Activated CD8-positive, alpha-beta T cell treated with anti-CD3 and anti-CD28 coated beads, Interleukin-2, amount 10 ng/mL, durations not matched to agents 7 days and 5 days (primary cell): ENCODE measurements at regions of chr18 and their contacts with region 1.

Region 1: GRCh38 chr18:77207540-77207939 is 42.1 kb upstream of the GALR1 start:
- DNase-seq: peak; percentile 55
- ATAC-seq: peak; percentile 68
- H3K4me3 Mint-ChIP-seq: no peak overlapping the region
- H3K27ac Mint-ChIP-seq: no peak overlapping the region
- H3K4me1 Mint-ChIP-seq: peaks cover 49% of the 10 kb centered on the region
- H3K27me3 Mint-ChIP-seq: no peaks in the 10 kb centered on the region

Region 2: GRCh38 chr18:77054606-77055428 is 152.7 kb before region 1 on chr18:
- CTCF ChIA-PET with region 1: interaction called, 10 read pairs
- POLR2A ChIA-PET with region 1: no interaction called
- DNase-seq: peak; percentile 93
- ATAC-seq: peak; percentile 91
- H3K4me3 Mint-ChIP-seq: peak overlapping the region; percentile 85
- H3K27ac Mint-ChIP-seq: peak overlapping the region; percentile 100
- H3K4me1 Mint-ChIP-seq: peaks cover 71% of the 10 kb centered on the region
- H3K27me3 Mint-ChIP-seq: no peaks in the 10 kb centered on the region

Region 3: GRCh38 chr18:77067291-77068061 is 140.1 kb before region 1 on chr18:
- CTCF ChIA-PET with region 1: interaction called, 16 read pairs
- POLR2A ChIA-PET with region 1: interaction called, 4 read pairs
- DNase-seq: peak; percentile 80
- ATAC-seq: peak; percentile 72
- H3K4me3 Mint-ChIP-seq: peak overlapping the region; percentile 61
- H3K27ac Mint-ChIP-seq: peak overlapping the region; percentile 95
- H3K4me1 Mint-ChIP-seq: peaks cover 99% of the 10 kb centered on the region
- H3K27me3 Mint-ChIP-seq: no peaks in the 10 kb centered on the region

Region 4: GRCh38 chr18:77101410-77102258 is 105.9 kb before region 1 on chr18:
- CTCF ChIA-PET with region 1: interaction called, 14 read pairs
- POLR2A ChIA-PET with region 1: interaction called, 5 read pairs
- DNase-seq: peak; percentile 48
- ATAC-seq: peak; percentile 56
- H3K4me3 Mint-ChIP-seq: peak overlapping the region; percentile 71
- H3K27ac Mint-ChIP-seq: peak overlapping the region; percentile 96
- H3K4me1 Mint-ChIP-seq: peaks cover 93% of the 10 kb centered on the region
- H3K27me3 Mint-ChIP-seq: no peaks in the 10 kb centered on the region

Region 5: DNA sequence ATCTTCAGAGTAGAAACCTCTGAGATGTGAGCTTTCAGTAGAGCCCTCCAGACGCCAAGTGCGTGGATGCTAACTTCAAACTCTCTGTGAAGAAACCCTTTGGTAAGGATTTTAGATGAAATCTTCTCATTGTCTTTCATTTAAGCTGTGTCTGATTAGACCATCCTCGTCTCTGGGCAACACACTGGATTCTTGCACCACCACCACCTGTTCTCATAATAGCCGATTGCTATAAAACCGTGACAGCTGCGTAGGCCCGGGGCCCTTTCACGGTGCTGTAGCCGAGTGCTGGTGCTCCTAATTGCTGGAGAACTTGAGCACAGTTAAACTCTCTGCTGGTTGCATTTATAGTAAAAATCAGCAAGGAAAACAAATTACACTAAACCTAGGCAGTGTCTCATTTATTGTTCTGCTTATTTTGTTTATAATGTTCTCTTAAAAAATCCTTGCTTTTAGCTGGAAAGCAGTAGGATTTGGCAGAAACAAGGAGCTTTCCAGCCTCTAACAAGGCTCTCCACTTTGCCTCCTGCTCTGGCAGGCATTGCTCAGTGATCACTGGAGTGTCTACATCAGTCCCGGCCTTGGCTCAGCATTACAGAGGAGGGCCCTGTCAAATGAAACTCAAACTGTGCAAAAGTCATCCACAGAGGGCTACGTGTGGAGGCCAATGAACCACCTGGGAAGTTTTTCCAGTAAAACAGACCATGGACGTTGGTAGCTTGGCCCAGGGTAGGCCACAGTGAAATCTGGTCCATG is 34.1 kb before region 1 on chr18:
- CTCF ChIA-PET with region 1: no interaction called
- POLR2A ChIA-PET with region 1: no interaction called
- DNase-seq: no peak
- ATAC-seq: no peak
- H3K4me3 Mint-ChIP-seq: no peak overlapping the region
- H3K27ac Mint-ChIP-seq: no peak overlapping the region
- H3K4me1 Mint-ChIP-seq: no peaks in the 10 kb centered on the region
- H3K27me3 Mint-ChIP-seq: peaks cover 5% of the 10 kb centered on the region

Region 6: DNA sequence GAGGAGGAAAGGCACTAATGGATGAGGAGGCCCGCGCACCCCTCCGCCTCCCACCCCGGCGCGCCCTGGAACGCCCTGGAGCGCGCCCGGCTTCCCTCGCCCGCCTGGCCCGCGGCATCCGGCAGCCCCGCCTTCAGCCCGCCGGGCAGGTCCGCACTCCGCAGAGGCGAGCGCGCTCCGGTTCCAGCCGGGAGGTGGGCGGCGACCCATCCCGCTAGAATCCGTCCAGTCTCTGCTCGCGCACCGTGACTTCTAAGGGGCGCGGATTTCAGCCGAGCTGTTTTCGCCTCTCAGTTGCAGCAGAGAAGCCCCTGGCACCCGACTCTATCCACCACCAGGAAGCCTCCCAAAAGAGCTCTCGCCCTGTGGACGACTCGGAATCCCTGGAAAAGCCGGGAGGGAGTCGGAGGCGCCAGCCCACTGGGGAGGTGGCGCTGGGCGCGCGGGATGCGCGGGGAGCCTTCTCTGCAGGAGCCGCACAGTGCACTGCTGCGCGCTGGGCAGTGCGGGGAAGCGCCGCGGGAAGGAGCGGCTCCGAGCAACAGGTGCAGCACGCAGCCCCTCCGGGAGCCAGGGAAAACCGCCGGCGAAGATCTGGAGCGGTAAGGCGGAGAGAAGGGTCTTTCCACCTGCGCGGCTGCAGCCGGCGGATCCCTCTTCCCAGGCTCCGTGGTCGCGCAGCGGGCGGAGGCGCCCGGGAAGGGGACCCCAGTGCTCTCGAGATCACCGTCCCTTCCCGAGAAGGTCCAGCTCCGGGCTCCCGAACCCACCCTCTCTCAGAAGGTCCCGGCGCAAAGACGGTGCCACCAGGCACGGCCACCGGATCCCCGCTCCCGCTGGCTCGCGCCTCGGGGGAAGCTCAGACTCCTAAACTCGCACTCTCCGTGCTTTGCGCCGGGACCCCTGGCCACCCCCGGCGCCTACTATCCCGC is 42.3 kb after region 1 on chr18 and contains the start of gene GALR1:
- CTCF ChIA-PET with region 1: no interaction called
- POLR2A ChIA-PET with region 1: no interaction called
- DNase-seq: no peak
- ATAC-seq: no peak
- H3K4me3 Mint-ChIP-seq: peak within 1 kb of the TSS; percentile 37
- H3K27ac Mint-ChIP-seq: peak within 1 kb of the TSS; percentile 69
- H3K4me1 Mint-ChIP-seq: peaks cover 8% of the 10 kb centered on the region
- H3K27me3 Mint-ChIP-seq: peaks cover 69% of the 10 kb centered on the region
- total RNA-seq, gene GALR1: not detected

Region 7: DNA sequence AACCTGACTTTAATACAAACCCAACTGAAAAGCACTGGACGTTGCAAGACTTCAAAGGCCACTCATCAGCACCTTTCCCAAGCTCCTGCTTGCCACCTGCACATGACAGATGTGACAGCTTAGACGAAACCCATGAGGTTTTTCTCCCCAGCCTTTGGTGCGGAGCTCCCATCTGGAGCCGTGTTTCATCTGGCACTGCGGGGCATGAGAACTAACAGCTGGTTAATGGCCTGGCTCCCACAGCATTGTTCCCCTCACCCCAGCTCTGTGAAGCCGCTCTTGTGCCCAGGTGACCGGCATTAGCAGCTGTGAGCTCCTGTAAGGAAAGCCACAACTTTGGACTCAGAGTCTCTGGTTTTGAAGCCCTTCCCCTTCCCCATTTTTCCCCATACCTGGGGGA is 93.0 kb after region 1 on chr18:
- CTCF ChIA-PET with region 1: no interaction called
- POLR2A ChIA-PET with region 1: no interaction called
- DNase-seq: no peak
- ATAC-seq: no peak
- H3K4me3 Mint-ChIP-seq: no peak overlapping the region
- H3K27ac Mint-ChIP-seq: no peak overlapping the region
- H3K4me1 Mint-ChIP-seq: no peaks in the 10 kb centered on the region
- H3K27me3 Mint-ChIP-seq: peaks cover 3% of the 10 kb centered on the region

Region 8: DNA sequence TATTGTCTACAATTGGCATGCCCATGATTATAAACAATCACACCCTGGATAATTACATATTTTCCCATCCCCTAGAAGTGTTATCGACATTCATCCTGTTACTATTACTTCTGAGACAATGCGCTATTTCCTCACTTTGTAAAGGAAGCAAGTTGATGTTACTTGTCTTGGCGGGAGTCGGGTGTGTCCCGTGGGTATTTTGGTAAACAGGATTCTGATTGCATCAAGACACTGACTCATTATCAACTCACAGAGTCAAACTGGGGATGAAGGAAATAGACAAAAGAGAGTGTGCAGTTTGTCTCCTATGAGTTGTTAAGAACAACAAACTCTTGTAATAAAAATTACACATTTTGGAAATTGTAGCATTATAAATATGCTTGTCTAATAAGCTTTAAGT is 184.8 kb after region 1 on chr18:
- CTCF ChIA-PET with region 1: no interaction called
- POLR2A ChIA-PET with region 1: no interaction called
- DNase-seq: no peak
- ATAC-seq: no peak
- H3K4me3 Mint-ChIP-seq: no peak overlapping the region
- H3K27ac Mint-ChIP-seq: no peak overlapping the region
- H3K4me1 Mint-ChIP-seq: no peaks in the 10 kb centered on the region
- H3K27me3 Mint-ChIP-seq: peaks cover 11% of the 10 kb centered on the region